ENCODE measurements at regions of chr2 and their contacts with region 1.

Region 1: DNA sequence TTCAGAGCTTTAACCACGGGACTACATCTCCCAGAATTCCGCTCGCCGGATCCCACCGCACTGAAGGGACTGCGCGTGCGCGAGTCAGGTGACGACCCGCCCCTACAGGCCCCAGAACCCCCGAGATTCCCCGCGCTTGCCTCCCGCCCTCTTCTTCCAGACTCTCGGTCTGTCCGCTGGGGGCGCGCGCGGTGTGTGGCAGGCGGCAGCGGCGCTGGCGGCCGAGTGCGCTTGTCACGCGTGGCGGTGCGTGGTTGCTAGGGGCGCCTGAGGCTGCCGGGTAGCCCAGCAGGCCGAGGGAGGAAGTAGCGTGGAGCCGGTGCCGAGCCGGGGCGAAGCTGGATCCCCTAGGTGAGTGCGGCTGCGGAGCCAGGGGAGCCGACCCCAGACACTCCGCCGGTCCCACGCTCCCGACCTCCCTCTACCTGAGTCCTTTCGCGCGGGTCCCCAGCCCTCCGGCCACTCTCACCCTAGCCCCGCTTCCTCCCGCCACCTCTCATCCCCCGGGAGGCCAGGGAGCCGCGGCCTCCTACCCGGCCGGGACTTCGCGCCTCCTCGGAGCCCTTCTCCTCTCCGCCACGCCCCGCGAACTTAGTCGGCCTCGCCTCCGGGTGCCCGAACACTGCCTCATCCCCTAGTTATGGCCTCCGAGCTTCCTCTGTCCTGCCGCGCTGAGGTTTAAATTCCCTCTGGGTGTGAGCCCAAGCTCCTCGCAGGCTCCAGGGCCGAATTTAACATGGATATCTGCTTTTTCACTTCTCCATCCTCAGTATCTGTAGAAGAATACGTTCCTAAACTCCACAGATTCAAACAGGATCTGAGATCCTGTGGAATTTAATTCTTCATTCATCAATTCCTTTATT is at the start of gene TTLL4:
- H3K4me3 ChIP-seq: peak within 1 kb of the TSS; percentile 99
- H3K27ac ChIP-seq: peak within 1 kb of the TSS; percentile 83
- H3K4me1 ChIP-seq: peaks cover 3% of the 10 kb centered on the region
- CTCF ChIP-seq: peak; percentile 99

Region 2: DNA sequence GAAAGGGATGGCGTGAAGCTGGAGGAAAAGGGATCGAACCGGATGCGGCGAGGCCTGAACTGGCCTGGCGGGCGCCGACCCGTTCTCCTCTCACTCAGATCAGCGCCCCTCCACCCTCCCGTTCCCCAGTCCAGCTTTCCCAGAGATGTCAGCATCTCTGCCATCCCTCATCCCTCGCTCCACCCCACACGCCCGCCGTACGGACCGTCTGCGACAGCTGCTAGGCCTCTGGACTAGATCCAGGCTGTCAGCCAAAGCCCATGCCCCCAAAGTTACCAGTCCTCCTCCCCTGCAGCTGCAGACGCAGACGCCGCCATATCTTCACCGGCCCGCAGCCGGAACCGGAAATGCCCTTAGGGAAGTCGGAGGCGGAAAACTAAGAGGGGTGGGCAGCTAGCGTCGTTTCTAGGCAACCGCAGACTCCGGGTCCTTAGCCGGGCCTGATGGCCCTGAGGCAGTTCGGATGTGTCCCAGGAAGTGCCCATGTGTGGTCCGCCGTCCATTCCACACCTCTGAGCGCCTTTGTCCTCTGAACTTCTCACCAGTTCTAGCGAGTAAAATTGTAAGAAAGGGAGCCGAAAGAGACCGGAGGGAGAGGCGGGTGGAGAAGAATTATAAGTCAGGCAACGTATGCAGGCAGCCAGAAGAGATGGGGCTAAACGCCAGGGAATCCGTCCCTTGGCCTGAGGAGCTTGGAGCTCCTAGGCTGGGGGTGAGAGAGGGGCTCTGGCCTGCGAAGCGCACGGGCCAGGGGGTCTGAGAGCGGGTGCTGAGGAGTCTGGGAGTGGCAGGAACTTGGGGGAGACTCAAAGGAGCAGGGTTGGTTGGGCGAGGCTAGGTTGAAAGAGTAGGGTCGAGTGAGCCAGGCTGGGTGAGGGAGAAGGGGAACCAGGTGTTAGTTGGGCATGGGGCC is 39.0 kb before region 1 on chr2 and contains the starts of genes RNF25 and STK36:
- CTCF ChIA-PET with region 1: interaction called, 6 read pairs
- POLR2A ChIA-PET with region 1: interaction called, 12 read pairs
- H3K4me3 ChIP-seq: peak within 1 kb of the TSS; percentile 94
- H3K27ac ChIP-seq: peak within 1 kb of the TSS; percentile 54
- H3K4me1 ChIP-seq: no peaks in the 10 kb centered on the region
- CTCF ChIP-seq: peak; percentile 38; the same call in 1 of the 2 replicates

Region 3: DNA sequence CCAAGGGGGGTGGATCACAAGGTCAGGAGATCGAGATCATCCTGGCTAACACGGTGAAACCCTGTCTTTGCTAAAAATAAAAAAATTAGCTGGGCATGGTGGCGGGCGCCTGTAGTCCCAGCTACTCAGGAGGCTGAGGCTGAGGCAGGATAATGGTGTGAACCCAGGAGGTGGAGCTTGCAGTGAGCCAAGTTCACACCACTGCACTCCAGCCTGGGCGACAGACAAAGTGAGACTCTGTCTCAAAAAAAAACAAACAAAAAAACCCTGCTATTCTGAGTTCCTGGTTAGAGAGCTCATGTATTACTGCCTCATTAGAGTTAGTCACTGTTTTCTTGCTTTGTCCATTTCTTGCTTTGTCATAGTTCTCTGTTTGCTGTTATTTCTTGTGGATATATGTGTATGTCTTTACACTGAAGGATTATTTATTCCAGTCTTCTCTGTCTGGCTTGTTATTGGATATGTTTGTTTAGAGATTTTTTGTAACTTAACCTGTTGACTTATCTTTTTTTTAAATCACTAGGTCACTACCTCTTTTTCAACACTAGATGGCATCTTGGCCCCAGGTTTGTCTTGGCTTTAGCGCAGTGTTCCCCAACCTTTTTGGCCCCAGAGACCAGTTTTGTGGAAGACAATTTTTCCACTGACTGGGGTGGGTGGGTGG is 16.7 kb after region 1 on chr2:
- CTCF ChIA-PET with region 1: interaction called, 41 read pairs
- POLR2A ChIA-PET with region 1: interaction called, 10 read pairs
- H3K4me3 ChIP-seq: no peak overlapping the region
- H3K27ac ChIP-seq: no peak overlapping the region
- H3K4me1 ChIP-seq: peaks cover 18% of the 10 kb centered on the region
- CTCF ChIP-seq: no peak

Region 4: GRCh38 chr2:218733171-218734021 is 22.5 kb after region 1 on chr2:
- CTCF ChIA-PET with region 1: interaction called, 10 read pairs
- POLR2A ChIA-PET with region 1: interaction called, 10 read pairs
- H3K4me3 ChIP-seq: no peak overlapping the region
- H3K27ac ChIP-seq: no peak overlapping the region
- H3K4me1 ChIP-seq: peaks cover 6% of the 10 kb centered on the region
- CTCF ChIP-seq: no peak

Region 5: DNA sequence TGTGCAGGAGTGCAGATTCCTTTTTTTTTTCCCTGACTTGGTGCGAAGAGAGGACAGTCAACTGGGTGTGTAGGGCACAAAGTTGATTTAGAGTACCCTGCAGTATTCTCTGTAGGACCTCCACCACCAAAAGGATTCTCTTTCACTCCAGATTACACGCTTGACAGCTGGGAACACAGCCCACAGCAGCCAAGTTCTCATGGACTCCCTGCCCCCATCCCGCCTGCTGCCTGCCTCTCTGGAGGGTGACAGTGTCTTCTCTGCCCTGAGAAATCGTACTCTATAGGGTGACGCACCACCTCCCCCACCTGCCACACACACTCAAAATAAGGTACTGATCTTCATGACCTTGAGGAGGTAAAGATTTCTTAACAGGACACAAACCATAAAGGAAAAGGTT is 376.4 kb after region 1 on chr2:
- CTCF ChIA-PET with region 1: no interaction called
- POLR2A ChIA-PET with region 1: no interaction called
- H3K4me3 ChIP-seq: no peak overlapping the region
- H3K27ac ChIP-seq: no peak overlapping the region
- H3K4me1 ChIP-seq: no peaks in the 10 kb centered on the region
- CTCF ChIP-seq: no peak

Measured in HEK293 (cell line).